ENCODE measurements at regions of chr21 and their contacts with region 1.

Region 1: DNA sequence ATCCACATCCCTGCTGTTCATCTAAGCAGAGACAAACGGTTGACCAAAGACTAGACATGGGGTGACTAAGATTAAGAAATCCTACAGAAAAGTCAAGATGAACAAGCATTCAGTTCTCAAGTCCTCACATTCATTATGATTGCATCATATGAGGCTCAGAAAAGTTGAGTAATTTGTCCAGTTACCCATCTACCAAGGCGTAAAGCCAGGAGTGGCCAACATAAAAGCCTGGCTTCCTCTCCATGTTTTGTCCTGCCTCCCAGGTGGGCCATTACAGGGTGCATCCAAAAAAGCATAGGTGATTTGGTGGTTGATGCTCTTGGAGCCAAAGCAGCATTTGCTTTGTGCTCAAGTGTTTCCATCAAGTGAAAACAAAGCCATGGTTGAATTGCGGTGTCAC is 53.8 kb downstream of the KCNJ15 start:
- DNase-seq: no peak
- H3K4me3 ChIP-seq: no peak overlapping the region
- H3K27ac ChIP-seq: no peak overlapping the region
- H3K4me1 ChIP-seq: no peaks in the 10 kb centered on the region
- H3K27me3 ChIP-seq: peaks cover 12% of the 10 kb centered on the region
- CTCF ChIP-seq: no peak
- EP300 ChIP-seq: no peak
- POLR2A ChIP-seq: no peak

Region 2: DNA sequence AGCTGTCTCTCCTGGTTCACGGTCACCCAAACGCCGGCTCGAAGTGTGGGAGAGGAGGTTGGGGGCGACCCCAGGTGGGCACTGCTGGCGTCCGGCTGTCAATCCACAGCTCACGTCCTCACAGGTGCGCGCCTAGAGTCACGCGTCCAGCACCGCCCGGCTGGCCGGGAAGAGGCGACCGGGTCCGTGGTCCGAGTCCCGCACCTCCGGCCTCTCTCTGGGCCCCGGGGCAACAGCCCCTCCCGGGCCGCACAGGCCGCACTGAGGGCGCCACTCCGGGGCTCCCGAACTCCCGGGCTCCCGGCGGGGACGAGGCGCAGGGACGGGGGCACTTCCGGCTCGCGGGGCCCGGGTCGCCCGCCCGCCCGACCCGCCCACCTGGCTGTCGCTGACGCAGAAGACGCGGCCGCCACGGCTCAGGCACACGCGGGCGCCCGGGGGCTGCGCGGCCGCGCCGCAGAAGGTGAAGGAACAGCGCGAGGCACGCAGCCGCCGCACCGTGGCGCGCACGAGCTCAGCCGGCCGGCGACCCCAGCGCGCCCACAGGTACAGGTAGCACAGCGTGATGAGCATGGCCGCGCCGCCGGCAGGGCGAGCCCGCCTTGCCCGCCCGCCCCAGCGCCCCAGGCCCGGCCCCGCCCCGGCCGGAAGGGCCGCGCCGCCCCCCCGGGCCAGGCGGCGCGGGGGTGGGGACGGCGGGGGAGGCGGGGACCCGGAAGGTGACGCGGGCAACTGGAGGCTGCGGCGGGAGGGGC is 1344.4 kb before region 1 on chr21 and contains the start of gene HLCS:
- in situ Hi-C with region 1: no loop called
- intact Hi-C with region 1: no loop called
- DNase-seq: peak; percentile 85
- H3K4me3 ChIP-seq: peak within 1 kb of the TSS; percentile 70 to 86 (median 78)
- H3K27ac ChIP-seq: peak within 1 kb of the TSS; percentile 84 to 93 (median 87)
- H3K4me1 ChIP-seq: peaks cover 0 to 19% (median 6%) of the 10 kb centered on the region in 4 donors
- H3K27me3 ChIP-seq: no peaks in the 10 kb centered on the region
- CTCF ChIP-seq: peak in 1 of 5 experiments; percentile 23
- EP300 ChIP-seq: no peak
- POLR2A ChIP-seq: peak; percentile 38
- total RNA-seq, gene HLCS: 20.0 to 75.4 (median 32.8) TPM

Region 3: DNA sequence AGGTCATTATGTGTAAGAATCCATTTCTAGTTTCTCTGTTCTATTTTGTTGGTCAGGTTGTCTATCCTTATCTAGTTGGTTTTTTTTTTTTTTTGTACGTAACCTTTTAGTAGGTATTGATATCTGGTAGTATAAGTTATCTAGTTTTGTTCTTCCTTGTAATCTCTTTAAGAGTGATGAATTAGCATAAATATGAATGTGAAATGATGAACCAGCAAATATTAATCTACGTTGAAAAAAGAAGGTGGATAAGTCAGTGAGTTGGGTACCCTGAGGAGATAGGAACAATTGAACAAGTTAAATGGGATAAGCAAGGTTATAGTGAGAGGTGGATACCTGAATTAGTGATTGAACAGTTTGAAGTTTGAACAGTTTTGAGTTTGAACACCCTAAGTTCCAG is 1203.6 kb before region 1 on chr21:
- in situ Hi-C with region 1: no loop called
- intact Hi-C with region 1: loop called (anchors 5 kb)
- DNase-seq: no peak
- H3K4me3 ChIP-seq: no peak overlapping the region
- H3K27ac ChIP-seq: no peak overlapping the region
- H3K4me1 ChIP-seq: no peaks in the 10 kb centered on the region
- H3K27me3 ChIP-seq: no peaks in the 10 kb centered on the region
- CTCF ChIP-seq: no peak
- EP300 ChIP-seq: no peak
- POLR2A ChIP-seq: no peak

Region 4: GRCh38 chr21:40011371-40011770 is 1700.8 kb after region 1 on chr21:
- in situ Hi-C with region 1: no loop called
- intact Hi-C with region 1: no loop called
- DNase-seq: no peak
- H3K4me3 ChIP-seq: no peak overlapping the region
- H3K27ac ChIP-seq: peak overlapping the region in 2 of 4 donors; percentile 5 to 19
- H3K4me1 ChIP-seq: no peaks in the 10 kb centered on the region
- H3K27me3 ChIP-seq: no peaks in the 10 kb centered on the region
- CTCF ChIP-seq: no peak
- EP300 ChIP-seq: no peak
- POLR2A ChIP-seq: no peak